ENCODE measurements at regions of chr11 and their contacts with region 1.

Region 1: GRCh38 chr11:76388408-76388807 is 7.3 kb downstream of the GVQW3 start:
- DNase-seq: no peak
- ATAC-seq: no peak
- H3K4me3 Mint-ChIP-seq: no peak overlapping the region
- H3K27ac Mint-ChIP-seq: no peak overlapping the region
- H3K4me1 Mint-ChIP-seq: peaks cover 6% of the 10 kb centered on the region
- H3K27me3 Mint-ChIP-seq: no peaks in the 10 kb centered on the region
- CTCF ChIP-seq: no peak

Region 2: DNA sequence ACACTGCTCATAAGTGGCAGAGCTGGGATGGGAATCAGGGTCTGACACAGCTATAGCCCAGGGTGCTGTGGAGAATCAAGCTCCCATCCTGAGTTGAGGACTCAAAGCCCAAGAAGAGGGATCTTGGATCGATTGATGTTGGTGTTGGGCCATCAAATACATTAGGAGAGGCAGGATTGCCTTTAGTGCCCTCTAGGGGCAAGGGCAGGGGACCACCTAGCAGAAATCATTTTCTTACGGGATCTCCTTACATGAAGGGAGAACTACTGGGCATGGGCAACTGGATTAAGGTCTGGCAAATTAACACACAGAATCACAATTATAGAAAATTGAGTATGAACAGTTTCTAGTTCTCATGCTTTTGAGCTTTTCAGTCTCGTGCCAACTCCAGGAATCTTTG is 31.5 kb after region 1 on chr11:
- CTCF ChIA-PET with region 1: interaction called, 10 read pairs
- POLR2A ChIA-PET with region 1: no interaction called
- intact Hi-C with region 1: no loop called
- DNase-seq: peak; percentile 31
- ATAC-seq: peak; percentile 48
- H3K4me3 Mint-ChIP-seq: no peak overlapping the region
- H3K27ac Mint-ChIP-seq: no peak overlapping the region
- H3K4me1 Mint-ChIP-seq: peaks cover 10% of the 10 kb centered on the region
- H3K27me3 Mint-ChIP-seq: peaks cover 5% of the 10 kb centered on the region
- CTCF ChIP-seq: peak; percentile 54